Cardiac septum (tissue), 1 donor: ENCODE measurements at regions of chr19 and their contacts with region 1.

Region 1: GRCh38 chr19:58203814-58204475 is 21.1 kb downstream of the ZNF274 start:
- DNase-seq: no peak

Region 2: DNA sequence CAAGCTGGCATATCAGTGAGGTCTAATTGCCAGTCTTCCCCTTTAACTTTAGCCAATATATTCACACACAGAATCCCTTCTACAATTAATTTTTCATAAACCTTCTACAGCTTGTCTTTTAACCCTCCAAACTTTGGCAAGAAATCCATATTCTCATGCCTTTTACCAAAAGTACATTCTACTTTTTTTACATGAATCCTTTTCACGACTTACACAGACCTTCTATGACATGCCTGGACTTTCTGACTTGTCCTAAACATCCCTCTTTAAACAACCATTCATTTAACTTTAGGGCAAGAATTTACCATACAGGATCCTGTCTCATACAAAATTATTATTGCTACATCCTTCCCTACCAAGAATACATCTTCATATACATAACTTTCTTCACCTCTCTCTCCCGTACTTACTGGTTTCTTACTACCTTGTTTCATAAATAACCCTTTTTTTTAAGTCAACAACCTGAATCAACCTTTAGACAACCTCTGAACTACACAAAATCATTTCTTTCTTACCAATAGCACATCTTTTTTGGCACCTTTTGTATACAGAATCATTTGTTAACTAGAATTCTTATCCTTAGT is 48.2 kb after region 1 on chr19:
- intact Hi-C with region 1: loop called (anchors 5 kb)
- DNase-seq: no peak